ENCODE measurements at regions of chr1 and their contacts with region 1.

Region 1: GRCh38 chr1:169601093-169601881 is 15.0 kb upstream of the F5 start:
- DNase-seq: peak in 2 of 35 experiments; percentile 7 to 61
- ATAC-seq: no peak
- H3K4me3 ChIP-seq: no peak overlapping the region
- H3K4me3 Mint-ChIP-seq: peak overlapping the region in 1 of 3 donors; percentile 59
- H3K27ac ChIP-seq: peak overlapping the region; percentile 18
- H3K27ac Mint-ChIP-seq: peak overlapping the region; percentile 84 to 91
- H3K4me1 ChIP-seq: peaks cover 35 to 47% of the 10 kb centered on the region in 2 experiments
- H3K4me1 Mint-ChIP-seq: peaks cover 54 to 57% (median 55%) of the 10 kb centered on the region in 3 donors
- H3K27me3 ChIP-seq: no peaks in the 10 kb centered on the region
- H3K27me3 Mint-ChIP-seq: no peaks in the 10 kb centered on the region

Region 2: GRCh38 chr1:169694304-169695075 is 93.2 kb after region 1 on chr1:
- CTCF ChIA-PET with region 1: interaction called, 28 to 53 read pairs
- POLR2A ChIA-PET with region 1: interaction called in 1 of 2 experiments, 6 read pairs
- DNase-seq: peak in 31 of 35 experiments; percentile 11 to 80 (median 50)
- ATAC-seq: peak; percentile 62 to 70 (median 64)
- H3K4me3 ChIP-seq: peak overlapping the region in 1 of 2 donors; percentile 15
- H3K4me3 Mint-ChIP-seq: peak overlapping the region; percentile 32 to 91 (median 52)
- H3K27ac ChIP-seq: peak overlapping the region; percentile 85
- H3K27ac Mint-ChIP-seq: peak overlapping the region in 1 of 2 donors; percentile 93
- H3K4me1 ChIP-seq: peaks cover 81 to 91% of the 10 kb centered on the region in 2 experiments
- H3K4me1 Mint-ChIP-seq: peaks cover 17 to 98% (median 97%) of the 10 kb centered on the region in 3 donors
- H3K27me3 ChIP-seq: no peaks in the 10 kb centered on the region
- H3K27me3 Mint-ChIP-seq: no peaks in the 10 kb centered on the region

Region 3: DNA sequence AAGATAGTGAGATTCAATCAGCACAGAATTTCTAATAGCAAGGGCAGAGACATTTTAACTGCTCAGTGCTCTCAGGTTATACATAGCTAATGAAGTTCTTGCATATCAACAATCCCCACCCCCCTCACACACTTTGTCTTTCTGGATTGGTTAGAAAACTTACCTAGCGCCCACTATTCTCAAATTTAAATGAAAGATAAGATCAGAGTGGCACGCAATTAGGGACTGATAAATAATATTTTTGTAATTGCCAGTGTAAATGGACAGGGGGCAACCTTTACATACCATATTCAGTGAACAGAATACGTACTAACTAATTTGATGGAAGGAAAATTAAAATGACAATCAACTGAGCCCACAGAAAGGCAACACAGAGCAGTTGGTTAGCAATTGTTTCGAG is 98.4 kb after region 1 on chr1:
- CTCF ChIA-PET with region 1: interaction called, 28 to 53 read pairs
- POLR2A ChIA-PET with region 1: interaction called in 1 of 2 experiments, 5 read pairs
- DNase-seq: no peak
- ATAC-seq: no peak
- H3K4me3 ChIP-seq: peak overlapping the region in 1 of 2 donors; percentile 23
- H3K4me3 Mint-ChIP-seq: peak overlapping the region; percentile 44 to 91 (median 51)
- H3K27ac ChIP-seq: peak overlapping the region; percentile 36
- H3K27ac Mint-ChIP-seq: peak overlapping the region; percentile 92 to 95
- H3K4me1 ChIP-seq: peaks cover 75 to 94% of the 10 kb centered on the region in 2 experiments
- H3K4me1 Mint-ChIP-seq: peaks cover 67 to 98% (median 96%) of the 10 kb centered on the region in 3 donors
- H3K27me3 ChIP-seq: no peaks in the 10 kb centered on the region
- H3K27me3 Mint-ChIP-seq: no peaks in the 10 kb centered on the region

Region 4: DNA sequence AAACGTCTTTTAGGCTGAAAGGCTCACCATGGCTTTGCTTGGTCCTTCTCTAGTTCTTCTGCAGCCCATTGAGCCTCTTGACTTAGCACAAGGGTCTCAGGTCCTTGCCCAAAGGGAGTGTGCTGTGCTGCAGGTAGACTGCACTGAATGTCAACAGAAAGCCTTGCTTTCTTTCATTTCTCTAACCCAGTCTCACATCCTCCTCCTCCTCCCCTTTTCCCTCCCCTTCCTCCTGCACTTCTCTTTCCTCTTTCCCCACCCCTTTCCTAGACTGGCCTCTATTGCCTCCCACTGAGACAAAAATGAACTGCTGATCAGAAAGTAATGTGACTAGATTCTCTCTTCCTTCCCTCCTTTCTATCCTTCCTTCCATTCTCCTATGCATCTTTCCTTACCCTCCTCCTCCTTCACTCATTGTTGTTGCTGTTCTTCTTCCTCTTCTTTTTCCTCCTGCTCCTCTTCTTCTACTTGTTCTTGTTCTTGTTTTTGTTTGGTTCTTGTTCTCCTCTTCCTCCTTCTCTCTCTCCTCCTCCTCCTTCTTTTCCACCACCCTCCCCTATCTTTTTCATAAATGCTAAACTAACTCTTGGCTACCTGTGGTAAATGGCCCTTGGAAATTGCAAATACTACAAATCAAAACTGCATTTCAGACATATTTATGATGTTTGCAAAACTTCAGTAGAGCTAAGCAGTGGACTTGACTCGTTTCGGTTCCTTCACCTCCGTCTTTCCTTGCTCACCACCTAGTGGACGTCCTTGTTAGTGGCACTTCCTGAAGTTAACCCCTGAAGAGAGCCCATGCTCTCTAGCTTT is 110.4 kb after region 1 on chr1 and contains the start of gene SELL:
- CTCF ChIA-PET with region 1: interaction called, 37 to 69 read pairs
- POLR2A ChIA-PET with region 1: no interaction called
- DNase-seq: peak; percentile 43 to 89 (median 73)
- ATAC-seq: peak; percentile 76 to 81 (median 78)
- H3K4me3 ChIP-seq: peak within 1 kb of the TSS; percentile 59 to 76
- H3K4me3 Mint-ChIP-seq: peak within 1 kb of the TSS; percentile 88 to 98 (median 91)
- H3K27ac ChIP-seq: peak within 1 kb of the TSS; percentile 50
- H3K27ac Mint-ChIP-seq: peak within 1 kb of the TSS; percentile 99 to 100
- H3K4me1 ChIP-seq: peaks cover 4 to 16% of the 10 kb centered on the region in 2 experiments
- H3K4me1 Mint-ChIP-seq: peaks cover 19 to 35% (median 29%) of the 10 kb centered on the region in 3 donors
- H3K27me3 ChIP-seq: no peaks in the 10 kb centered on the region
- H3K27me3 Mint-ChIP-seq: peaks cover 3% of the 10 kb centered on the region in 2 donors
- total RNA-seq, gene SELL: 305 to 461 (median 336) TPM